ENCODE measurements at regions of chr6 and their contacts with region 1.

Region 1: GRCh38 chr6:130682066-130682465 is 145.1 kb upstream of the SMLR1 start:
- DNase-seq: no peak
- H3K27ac ChIP-seq: no peak overlapping the region
- CTCF ChIP-seq: no peak

Region 2: DNA sequence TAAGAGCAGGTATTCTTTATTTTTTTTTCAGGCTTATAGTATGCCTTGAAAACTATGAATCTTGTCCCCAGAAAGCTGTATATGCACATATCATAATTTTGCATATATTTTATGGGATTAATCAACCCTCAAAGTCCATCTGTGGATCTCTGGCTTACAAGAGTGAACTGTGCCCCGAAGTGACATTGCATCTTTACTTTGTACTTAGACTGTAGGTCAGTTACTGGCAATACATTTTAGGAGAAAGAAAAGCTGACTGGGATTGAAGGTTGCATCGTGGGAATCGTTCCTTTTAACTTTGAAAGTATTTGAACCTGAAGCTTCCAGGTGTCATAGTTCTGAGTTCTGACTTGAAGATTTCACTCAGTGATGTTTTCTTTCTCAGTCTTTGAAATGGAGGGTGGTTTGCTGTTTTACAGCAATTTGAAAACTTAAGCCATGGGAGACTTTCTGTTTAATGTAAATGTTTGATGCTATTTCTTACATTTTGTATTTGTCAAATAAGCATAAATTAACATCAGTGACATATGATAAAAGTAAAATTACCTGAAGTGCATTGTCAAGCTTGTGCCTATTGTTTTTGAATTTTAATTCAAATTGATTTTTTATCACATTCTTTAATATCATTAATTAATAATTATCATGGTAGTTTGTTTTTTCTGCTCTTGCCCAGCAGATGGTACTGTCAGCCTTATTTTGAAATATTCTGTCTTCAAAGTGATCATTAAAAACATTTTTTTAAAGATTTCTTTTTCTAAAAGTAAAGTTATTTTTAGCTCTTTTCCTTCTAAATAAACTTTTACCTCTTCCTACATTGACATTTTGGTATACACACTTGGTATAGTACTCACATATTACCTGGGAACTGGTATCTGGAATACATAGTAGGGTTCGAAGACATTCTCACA is 634.7 kb before region 1 on chr6:
- CTCF ChIA-PET with region 1: no interaction called
- POLR2A ChIA-PET with region 1: no interaction called
- DNase-seq: no peak
- H3K27ac ChIP-seq: no peak overlapping the region
- CTCF ChIP-seq: peak; percentile 11; the same call in 1 of the 2 replicates

Region 3: GRCh38 chr6:130671577-130671976 is 10.5 kb before region 1 on chr6:
- CTCF ChIA-PET with region 1: interaction called, 10 read pairs
- POLR2A ChIA-PET with region 1: no interaction called
- DNase-seq: no peak
- H3K27ac ChIP-seq: no peak overlapping the region
- CTCF ChIP-seq: no peak

Measured in RWPE1 (cell line).